ENCODE measurements at regions of chrX and their contacts with region 1.

Region 1: GRCh38 chrX:16610121-16610621 is 39.8 kb upstream of the S100G start:
- DNase-seq: no peak
- H3K4me3 ChIP-seq: no peak overlapping the region
- H3K4me3 Mint-ChIP-seq: no peak overlapping the region
- H3K27ac ChIP-seq: no peak overlapping the region
- H3K27ac Mint-ChIP-seq: no peak overlapping the region
- H3K4me1 ChIP-seq: peaks cover 9% of the 10 kb centered on the region
- H3K4me1 Mint-ChIP-seq: peaks cover under 1 to 18% (median 11%) of the 10 kb centered on the region in 4 donors
- H3K27me3 ChIP-seq: no peaks in the 10 kb centered on the region
- H3K27me3 Mint-ChIP-seq: no peaks in the 10 kb centered on the region

Region 2: GRCh38 chrX:15335135-15336022 is 1274.8 kb before region 1 on chrX and contains the start of gene PIGA:
- CTCF ChIA-PET with region 1: no interaction called
- POLR2A ChIA-PET with region 1: no interaction called
- intact Hi-C with region 1: loop called (anchors 5 kb)
- DNase-seq: peak; percentile 87 to 97 (median 93)
- H3K4me3 ChIP-seq: peak within 1 kb of the TSS; percentile 73 to 84
- H3K4me3 Mint-ChIP-seq: peak within 1 kb of the TSS; percentile 90 to 96 (median 91)
- H3K27ac ChIP-seq: peak within 1 kb of the TSS; percentile 89
- H3K27ac Mint-ChIP-seq: peak within 1 kb of the TSS; percentile 95 to 97 (median 96)
- H3K4me1 ChIP-seq: peaks cover 20% of the 10 kb centered on the region
- H3K4me1 Mint-ChIP-seq: peaks cover 4 to 28% (median 8%) of the 10 kb centered on the region in 4 donors
- H3K27me3 ChIP-seq: peaks cover 5% of the 10 kb centered on the region
- H3K27me3 Mint-ChIP-seq: peaks cover 4 to 6% of the 10 kb centered on the region in 2 donors
- total RNA-seq, gene PIGA: 27.8 to 32.3 TPM

Region 3: GRCh38 chrX:17697191-17697590 is 1087.0 kb after region 1 on chrX:
- CTCF ChIA-PET with region 1: no interaction called
- POLR2A ChIA-PET with region 1: no interaction called
- intact Hi-C with region 1: no loop called
- DNase-seq: peak in 1 of 5 donors; percentile 4
- H3K4me3 ChIP-seq: no peak overlapping the region
- H3K4me3 Mint-ChIP-seq: no peak overlapping the region
- H3K27ac ChIP-seq: no peak overlapping the region
- H3K27ac Mint-ChIP-seq: no peak overlapping the region
- H3K4me1 ChIP-seq: no peaks in the 10 kb centered on the region
- H3K4me1 Mint-ChIP-seq: no peaks in the 10 kb centered on the region
- H3K27me3 ChIP-seq: no peaks in the 10 kb centered on the region
- H3K27me3 Mint-ChIP-seq: no peaks in the 10 kb centered on the region

Measured in CD4-positive, alpha-beta memory T cell (primary cell).